ENCODE measurements at regions of chr12 and their contacts with region 1.

Region 1: GRCh38 chr12:48851883-48852733 is at the start of gene DDX23:
- DNase-seq: peak; percentile 97
- CTCF ChIP-seq: no peak

Region 2: DNA sequence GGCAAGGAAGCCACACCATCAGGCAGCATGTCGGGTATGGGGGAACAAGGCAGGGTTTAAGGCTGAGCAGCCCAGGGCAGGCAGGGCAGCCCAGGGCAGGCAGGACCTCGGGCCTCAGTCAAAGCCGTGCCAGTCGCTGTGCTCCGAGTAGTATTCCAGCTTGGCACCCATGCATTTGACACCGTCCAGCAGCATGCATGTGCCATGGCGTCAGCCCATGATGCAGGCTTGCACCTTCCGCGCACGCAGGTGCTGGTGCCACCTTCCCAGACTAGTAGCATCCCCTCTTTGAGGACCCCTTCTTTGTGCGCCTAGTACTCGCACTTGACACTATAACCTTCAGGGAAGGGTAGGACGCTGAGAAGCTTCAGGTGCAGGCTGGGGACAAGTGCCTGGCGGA is 51.7 kb before region 1 on chr12:
- CTCF ChIA-PET with region 1: no interaction called
- POLR2A ChIA-PET with region 1: no interaction called
- DNase-seq: no peak
- CTCF ChIP-seq: no peak

Region 3: DNA sequence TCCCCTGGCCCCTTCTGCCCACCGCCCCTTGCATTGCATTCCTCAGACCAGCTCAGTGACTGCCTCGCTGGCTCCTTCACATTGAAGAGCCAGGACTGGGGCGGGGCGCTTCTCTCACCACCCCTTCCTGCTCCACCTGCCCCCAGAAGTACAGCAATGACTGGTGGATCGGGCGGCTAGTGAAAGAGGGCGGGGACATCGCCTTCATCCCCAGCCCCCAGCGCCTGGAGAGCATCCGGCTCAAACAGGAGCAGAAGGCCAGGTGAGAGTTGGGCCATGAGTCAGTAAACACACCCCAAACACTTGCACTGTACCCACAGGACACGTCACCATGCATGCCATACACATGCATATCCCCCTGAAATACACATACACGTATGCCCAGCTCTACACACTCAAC is 28.0 kb before region 1 on chr12:
- CTCF ChIA-PET with region 1: interaction called, 13 read pairs
- POLR2A ChIA-PET with region 1: interaction called, 5 read pairs
- DNase-seq: no peak
- CTCF ChIP-seq: no peak

Region 4: GRCh38 chr12:48865434-48866290 is 13.6 kb after region 1 on chr12 and contains the start of gene RND1:
- CTCF ChIA-PET with region 1: interaction called, 127 read pairs
- POLR2A ChIA-PET with region 1: interaction called, 32 read pairs
- DNase-seq: peak; percentile 93
- CTCF ChIP-seq: no peak

Region 5: GRCh38 chr12:48890657-48891418 is 38.7 kb after region 1 on chr12:
- CTCF ChIA-PET with region 1: interaction called, 313 read pairs
- POLR2A ChIA-PET with region 1: interaction called, 3 read pairs
- DNase-seq: peak; percentile 83
- CTCF ChIP-seq: peak; percentile 85

Region 6: GRCh38 chr12:48936379-48936979 is 84.4 kb after region 1 on chr12:
- CTCF ChIA-PET with region 1: interaction called, 51 read pairs
- POLR2A ChIA-PET with region 1: interaction called, 3 read pairs
- DNase-seq: peak; percentile 85
- CTCF ChIP-seq: peak; percentile 92

Region 7: DNA sequence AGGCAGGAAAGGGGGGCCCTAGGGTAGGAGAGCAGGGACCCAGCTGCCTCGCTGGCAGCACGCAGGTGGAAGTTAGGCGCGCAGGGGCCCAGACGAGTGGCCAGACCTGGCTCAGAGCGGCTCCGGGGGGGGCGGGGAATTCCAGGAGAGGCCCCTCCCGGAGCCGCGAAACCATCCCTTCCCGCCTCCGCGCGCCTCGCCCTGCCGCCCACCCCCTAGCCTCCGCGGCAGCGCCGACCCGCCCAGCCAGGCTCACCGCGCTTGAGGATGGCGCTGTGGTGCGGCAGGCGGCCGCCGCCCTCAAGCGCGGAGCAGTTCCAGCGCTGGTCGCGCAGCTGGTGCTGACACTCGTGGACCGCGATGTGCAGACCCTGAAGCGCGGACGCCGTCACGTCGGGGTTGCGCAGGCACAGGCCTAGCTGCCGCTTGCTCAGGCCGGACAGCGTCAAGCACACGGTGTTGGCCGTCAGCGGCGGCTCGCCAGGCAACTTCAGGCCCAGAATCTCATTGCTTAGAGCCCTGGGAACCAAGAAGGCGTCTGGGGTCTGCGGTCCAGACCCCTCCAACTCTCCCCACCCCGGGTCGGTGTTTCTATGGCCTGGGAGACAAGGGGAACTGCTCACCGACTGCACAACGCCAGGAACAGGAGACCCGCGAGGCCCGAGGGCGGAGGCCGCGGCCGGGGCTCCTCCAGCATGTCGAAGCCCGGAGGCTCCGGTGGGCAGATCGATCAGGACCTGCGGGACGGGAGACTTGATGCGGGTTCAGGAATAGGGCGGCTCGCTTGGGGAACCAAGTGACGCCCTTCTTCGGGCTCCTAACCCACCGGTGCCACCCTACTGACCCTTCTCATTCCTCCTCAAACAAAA is 118.0 kb after region 1 on chr12:
- CTCF ChIA-PET with region 1: interaction called, 14 read pairs
- POLR2A ChIA-PET with region 1: no interaction called
- DNase-seq: peak; percentile 66
- CTCF ChIP-seq: peak; percentile 29

Region 8: GRCh38 chr12:48995061-48995879 is 143.2 kb after region 1 on chr12:
- CTCF ChIA-PET with region 1: interaction called, 45 read pairs
- POLR2A ChIA-PET with region 1: no interaction called
- DNase-seq: peak; percentile 83
- CTCF ChIP-seq: peak; percentile 81

Region 9: GRCh38 chr12:49413796-49414195 is 561.7 kb after region 1 on chr12:
- CTCF ChIA-PET with region 1: no interaction called
- POLR2A ChIA-PET with region 1: no interaction called
- DNase-seq: no peak
- CTCF ChIP-seq: no peak

Region 10: GRCh38 chr12:49789992-49790391 is 937.9 kb after region 1 on chr12:
- CTCF ChIA-PET with region 1: no interaction called
- POLR2A ChIA-PET with region 1: no interaction called
- DNase-seq: no peak
- CTCF ChIP-seq: no peak